Body of pancreas (tissue), 4 donors: ENCODE measurements at regions of chr1 and their contacts with region 1.

Region 1: GRCh38 chr1:154479764-154480421 is 22.1 kb upstream of the TDRD10 start:
- DNase-seq: peak; percentile 73 to 82 (median 74)
- ATAC-seq: peak; percentile 92
- H3K4me3 ChIP-seq: no peak overlapping the region
- H3K27ac ChIP-seq: no peak overlapping the region
- H3K4me1 ChIP-seq: peaks cover 6% of the 10 kb centered on the region
- H3K27me3 ChIP-seq: no peaks in the 10 kb centered on the region
- CTCF ChIP-seq: peak; percentile 82 to 98 (median 96)
- POLR2A ChIP-seq: no peak

Region 2: GRCh38 chr1:154546264-154547063 is 66.6 kb after region 1 on chr1:
- intact Hi-C with region 1: loop called (anchors 10 kb)
- DNase-seq: peak; percentile 57 to 61 (median 60)
- ATAC-seq: peak; percentile 68
- H3K4me3 ChIP-seq: no peak overlapping the region
- H3K27ac ChIP-seq: peak overlapping the region in 3 of 4 donors; percentile 59 to 84 (median 69)
- H3K4me1 ChIP-seq: peaks cover 38% of the 10 kb centered on the region
- H3K27me3 ChIP-seq: no peaks in the 10 kb centered on the region
- CTCF ChIP-seq: peak in 6 of 7 experiments; percentile 43 to 80 (median 64)
- POLR2A ChIP-seq: no peak